AG04450 (cell line): ENCODE measurements at regions of chr13 and their contacts with region 1.

Region 1: GRCh38 chr13:52011632-52012511 is at the start of gene ALG11:
- DNase-seq: peak; percentile 93
- H3K4me3 ChIP-seq: peak within 1 kb of the TSS; percentile 98
- H3K27ac ChIP-seq: peak within 1 kb of the TSS; percentile 31
- H3K27me3 ChIP-seq: peaks cover 18% of the 10 kb centered on the region
- CTCF ChIP-seq: no peak
- polyA plus RNA-seq, gene ALG11: 13.9 and 19.6 TPM in 2 replicates

Region 2: GRCh38 chr13:51562011-51562671 is 449.7 kb before region 1 on chr13:
- CTCF ChIA-PET with region 1: no interaction called
- POLR2A ChIA-PET with region 1: no interaction called
- DNase-seq: no peak
- H3K4me3 ChIP-seq: no peak overlapping the region
- H3K27ac ChIP-seq: no peak overlapping the region
- H3K27me3 ChIP-seq: no peaks in the 10 kb centered on the region
- CTCF ChIP-seq: no peak

Region 3: GRCh38 chr13:52001120-52001731 is 10.6 kb before region 1 on chr13:
- CTCF ChIA-PET with region 1: interaction called, 11 read pairs
- POLR2A ChIA-PET with region 1: no interaction called
- DNase-seq: peak; percentile 11
- H3K4me3 ChIP-seq: no peak overlapping the region
- H3K27ac ChIP-seq: no peak overlapping the region
- H3K27me3 ChIP-seq: peaks cover 29% of the 10 kb centered on the region
- CTCF ChIP-seq: peak; percentile 76